Motor neuron (in vitro differentiated cells): ENCODE measurements at regions of chr14 and their contacts with region 1.

Region 1: GRCh38 chr14:75577729-75578101 is 705 bp upstream of the FLVCR2 start:
- ATAC-seq: peak; percentile 61 to 85 (median 76)
- H3K4me3 ChIP-seq: peak overlapping the region; percentile 28 to 53 (median 35)
- H3K27ac ChIP-seq: no peak overlapping the region
- H3K4me1 ChIP-seq: peaks cover 8 to 15% of the 10 kb centered on the region in 2 donors

Region 2: DNA sequence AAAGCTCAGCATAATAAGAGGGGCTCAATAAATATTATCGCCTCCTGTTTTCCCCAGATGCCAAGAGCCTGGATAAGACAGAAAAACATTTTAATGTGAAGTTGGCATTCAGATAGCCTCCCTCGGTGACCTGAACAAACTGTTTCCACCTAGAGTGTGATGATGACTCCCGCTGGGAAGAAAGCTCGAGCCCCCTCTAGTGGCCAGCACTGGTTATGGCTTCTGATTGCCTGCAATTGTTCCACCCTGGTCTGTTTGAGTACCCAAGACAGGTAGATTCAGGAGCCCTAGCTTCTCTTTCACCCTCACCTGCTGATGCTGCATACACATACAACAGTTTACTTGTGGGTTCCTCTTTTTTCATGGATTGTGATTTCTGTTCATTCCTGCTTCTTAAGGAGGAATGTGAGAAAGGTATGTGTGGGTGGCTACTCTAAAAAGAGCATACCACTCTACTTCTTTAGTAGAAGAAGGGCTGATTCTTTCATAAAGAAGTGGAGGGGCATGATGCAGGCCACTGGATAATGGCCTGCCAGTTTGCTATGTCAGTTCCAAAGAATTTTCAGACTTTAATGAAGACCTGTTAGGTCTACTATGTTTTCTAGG is 76.5 kb after region 1 on chr14:
- in situ Hi-C with region 1: loop called in 2 of 9 experiments (anchors 5 to 10 kb)
- ATAC-seq: peak; percentile 75 to 93 (median 85)
- H3K4me3 ChIP-seq: no peak overlapping the region
- H3K27ac ChIP-seq: no peak overlapping the region
- H3K4me1 ChIP-seq: no peaks in the 10 kb centered on the region